K562 (cell line): ENCODE measurements at regions of chr12 and their contacts with region 1.

Region 1: GRCh38 chr12:76007197-76008039 is 24.2 kb downstream of the PHLDA1 start:
- DNase-seq: no peak
- ATAC-seq: no peak
- H3K4me3 ChIP-seq: no peak overlapping the region
- H3K27ac ChIP-seq: no peak overlapping the region
- H3K4me1 ChIP-seq: no peaks in the 10 kb centered on the region
- H3K27me3 ChIP-seq: peaks cover 0 to 21% of the 10 kb centered on the region in 2 experiments; a peak in 3 of 5 replicates
- CTCF ChIP-seq: no peak
- EP300 ChIP-seq: no peak
- POLR2A ChIP-seq: no peak
- RAD21 ChIP-seq: no peak

Region 2: DNA sequence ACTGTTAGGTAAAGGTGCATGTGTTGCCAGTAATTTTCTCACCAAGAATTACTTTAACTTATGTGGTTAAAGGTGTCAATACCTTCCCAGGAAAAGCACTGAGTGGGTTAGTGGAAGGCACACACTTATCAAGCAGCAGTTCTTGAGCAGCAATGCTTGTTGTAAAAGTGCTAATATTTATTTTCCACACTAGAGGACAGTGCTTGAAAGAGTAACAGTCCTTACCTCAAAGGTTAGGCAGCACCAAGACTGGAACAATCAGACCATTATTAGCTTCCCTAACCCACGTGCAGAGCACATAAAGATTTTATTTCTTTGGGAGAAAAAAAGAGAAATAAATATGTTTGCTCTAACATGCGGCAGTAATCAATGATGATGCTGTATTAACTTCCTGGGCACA is 447.3 kb before region 1 on chr12:
- CTCF ChIA-PET with region 1: no interaction called
- POLR2A ChIA-PET with region 1: no interaction called
- in situ Hi-C with region 1: no loop called
- intact Hi-C with region 1: no loop called
- DNase-seq: no peak
- ATAC-seq: no peak
- H3K4me3 ChIP-seq: no peak overlapping the region
- H3K27ac ChIP-seq: no peak overlapping the region
- H3K4me1 ChIP-seq: no peaks in the 10 kb centered on the region
- H3K27me3 ChIP-seq: peaks cover 0 to 8% of the 10 kb centered on the region in 2 experiments; a peak in 3 of 5 replicates
- CTCF ChIP-seq: peak in 2 of 3 experiments; percentile 18 to 26; a peak in 2 of 6 replicates
- EP300 ChIP-seq: no peak
- POLR2A ChIP-seq: no peak
- RAD21 ChIP-seq: peak; percentile 47 to 62

Region 3: DNA sequence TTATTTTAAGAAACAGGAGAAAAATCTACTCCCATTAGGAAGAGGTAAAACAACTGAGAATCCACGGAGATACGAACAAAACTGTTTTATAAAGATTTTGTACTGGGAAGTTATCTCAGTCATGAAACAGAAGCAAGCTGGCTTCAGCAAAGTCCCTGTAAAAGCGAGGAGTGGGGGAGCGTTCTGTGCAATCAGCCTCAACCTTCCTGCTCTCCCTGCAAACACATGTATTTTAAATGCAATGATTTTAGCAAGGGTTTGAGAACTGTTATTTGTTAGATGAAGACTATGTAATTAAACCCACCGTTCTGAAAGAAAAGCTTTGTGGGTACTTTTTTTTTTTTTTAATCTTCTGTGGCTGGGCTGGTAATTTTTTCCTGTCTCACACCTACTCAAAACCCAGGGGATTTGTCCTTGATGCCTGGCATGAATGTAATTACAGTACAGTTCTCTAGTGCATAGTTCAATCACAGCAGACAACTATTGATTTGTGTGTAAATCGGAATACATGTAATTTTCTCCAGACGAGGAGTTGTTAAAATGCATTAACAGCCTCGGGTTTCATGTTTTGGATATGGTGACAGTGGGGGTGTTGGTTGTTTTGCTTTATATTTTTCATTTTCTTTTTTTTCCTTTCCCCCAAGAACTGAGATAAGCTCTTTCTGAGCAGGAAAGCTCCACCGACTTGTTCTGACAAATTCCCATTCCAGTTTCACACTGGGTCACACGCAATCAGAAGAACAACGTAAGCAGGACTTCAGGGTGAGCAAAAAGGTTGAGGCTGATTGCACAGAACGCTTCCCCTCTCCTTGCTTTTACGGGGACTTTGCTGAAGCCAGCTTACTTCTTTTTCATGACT is 129.4 kb before region 1 on chr12:
- CTCF ChIA-PET with region 1: no interaction called
- POLR2A ChIA-PET with region 1: no interaction called
- in situ Hi-C with region 1: no loop called
- intact Hi-C with region 1: no loop called
- DNase-seq: no peak
- ATAC-seq: no peak
- H3K4me3 ChIP-seq: no peak overlapping the region
- H3K27ac ChIP-seq: no peak overlapping the region
- H3K4me1 ChIP-seq: no peaks in the 10 kb centered on the region
- H3K27me3 ChIP-seq: no peaks in the 10 kb centered on the region; a peak in 2 of 5 replicates
- CTCF ChIP-seq: no peak
- EP300 ChIP-seq: no peak
- POLR2A ChIP-seq: no peak
- RAD21 ChIP-seq: no peak

Region 4: GRCh38 chr12:76018672-76019071 is 11.3 kb after region 1 on chr12:
- CTCF ChIA-PET with region 1: no interaction called
- POLR2A ChIA-PET with region 1: no interaction called
- in situ Hi-C with region 1: no loop called
- intact Hi-C with region 1: loop called (anchors 1 kb)
- DNase-seq: no peak
- ATAC-seq: no peak
- H3K4me3 ChIP-seq: no peak overlapping the region
- H3K27ac ChIP-seq: no peak overlapping the region
- H3K4me1 ChIP-seq: peaks cover 0 to 11% of the 10 kb centered on the region in 2 experiments; a peak in 2 of 5 replicates
- H3K27me3 ChIP-seq: peaks cover under 1 to 3% of the 10 kb centered on the region in 2 experiments; a peak in 2 of 5 replicates
- CTCF ChIP-seq: no peak
- EP300 ChIP-seq: no peak
- POLR2A ChIP-seq: no peak
- RAD21 ChIP-seq: no peak